Ascending aorta (tissue), 2 donors: ENCODE measurements at regions of chr16 and their contacts with region 1.

Region 1: GRCh38 chr16:11797166-11797956 is at the start of gene ZC3H7A:
- DNase-seq: peak; percentile 85 to 98
- H3K4me3 ChIP-seq: peak within 1 kb of the TSS; percentile 70 to 91
- H3K27ac ChIP-seq: peak within 1 kb of the TSS; percentile 97 to 98
- H3K4me1 ChIP-seq: peaks cover 14 to 48% of the 10 kb centered on the region in 2 donors
- H3K27me3 ChIP-seq: no peaks in the 10 kb centered on the region
- CTCF ChIP-seq: peak; percentile 36 to 99 (median 53)
- total RNA-seq, gene ZC3H7A: 56.9 TPM

Region 2: GRCh38 chr16:10988164-10988803 is 809.1 kb before region 1 on chr16:
- intact Hi-C with region 1: no loop called
- DNase-seq: no peak
- H3K4me3 ChIP-seq: no peak overlapping the region
- H3K27ac ChIP-seq: no peak overlapping the region
- H3K4me1 ChIP-seq: no peaks in the 10 kb centered on the region
- H3K27me3 ChIP-seq: no peaks in the 10 kb centered on the region
- CTCF ChIP-seq: peak in 1 of 3 experiments; percentile 20

Region 3: GRCh38 chr16:11783319-11784037 is 13.9 kb before region 1 on chr16:
- intact Hi-C with region 1: loop called (anchors 2 kb)
- DNase-seq: no peak
- H3K4me3 ChIP-seq: peak overlapping the region; percentile 38 to 41
- H3K27ac ChIP-seq: peak overlapping the region; percentile 88 to 90
- H3K4me1 ChIP-seq: peaks cover 2 to 41% of the 10 kb centered on the region in 2 donors
- H3K27me3 ChIP-seq: no peaks in the 10 kb centered on the region
- CTCF ChIP-seq: no peak

Region 4: DNA sequence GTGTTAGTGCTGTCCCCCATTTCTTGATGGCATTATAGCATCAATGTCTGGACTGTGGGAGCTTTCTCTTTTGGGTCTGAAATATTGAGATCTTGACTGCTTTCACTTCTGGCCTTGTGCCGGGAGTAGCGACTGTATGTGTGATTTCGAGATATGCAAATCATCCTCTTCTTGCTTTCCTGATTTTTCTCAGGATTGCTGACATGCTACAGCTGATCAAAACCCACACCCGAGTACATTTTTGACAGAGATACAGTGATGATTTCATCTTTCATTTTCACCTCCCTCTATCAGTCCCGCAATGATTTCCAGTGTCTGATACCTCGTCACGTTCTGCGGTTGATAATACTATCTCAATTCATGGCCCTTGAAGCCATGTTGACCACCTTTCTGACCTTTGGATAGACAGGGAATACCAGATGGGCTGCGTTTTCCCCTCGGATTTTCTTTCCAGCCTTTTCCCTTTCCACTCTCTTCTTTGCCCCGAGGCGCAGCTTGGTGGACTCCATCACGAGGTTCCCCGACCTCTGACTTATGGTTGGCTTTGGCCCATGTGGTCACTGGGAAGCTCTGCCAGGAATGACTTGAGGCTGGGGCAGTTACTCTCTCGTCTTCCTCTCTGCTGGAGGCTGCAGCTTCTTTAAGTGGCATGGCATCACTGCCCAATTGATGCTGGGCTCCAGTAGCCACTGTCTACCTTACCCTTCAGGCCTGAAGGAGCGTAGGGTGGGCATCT is 363.6 kb after region 1 on chr16:
- intact Hi-C with region 1: no loop called
- DNase-seq: no peak
- H3K4me3 ChIP-seq: no peak overlapping the region
- H3K27ac ChIP-seq: no peak overlapping the region
- H3K4me1 ChIP-seq: no peaks in the 10 kb centered on the region
- H3K27me3 ChIP-seq: no peaks in the 10 kb centered on the region
- CTCF ChIP-seq: no peak